WTC11 (cell line): ENCODE measurements at regions of chr4 and their contacts with region 1.

Region 1: GRCh38 chr4:98506462-98507132 is 151.8 kb downstream of the TSPAN5 start:
- DNase-seq: peak; percentile 30
- ATAC-seq: peak; percentile 96
- H3K4me3 Mint-ChIP-seq: no peak overlapping the region; the same call in 1 of the 2 replicates
- H3K27ac Mint-ChIP-seq: peak overlapping the region; percentile 50; the same call in 1 of the 2 replicates
- H3K4me1 Mint-ChIP-seq: peaks cover 38% of the 10 kb centered on the region
- H3K27me3 Mint-ChIP-seq: no peaks in the 10 kb centered on the region
- CTCF ChIP-seq: peak; percentile 42; the same call in 1 of the 2 replicates

Region 2: DNA sequence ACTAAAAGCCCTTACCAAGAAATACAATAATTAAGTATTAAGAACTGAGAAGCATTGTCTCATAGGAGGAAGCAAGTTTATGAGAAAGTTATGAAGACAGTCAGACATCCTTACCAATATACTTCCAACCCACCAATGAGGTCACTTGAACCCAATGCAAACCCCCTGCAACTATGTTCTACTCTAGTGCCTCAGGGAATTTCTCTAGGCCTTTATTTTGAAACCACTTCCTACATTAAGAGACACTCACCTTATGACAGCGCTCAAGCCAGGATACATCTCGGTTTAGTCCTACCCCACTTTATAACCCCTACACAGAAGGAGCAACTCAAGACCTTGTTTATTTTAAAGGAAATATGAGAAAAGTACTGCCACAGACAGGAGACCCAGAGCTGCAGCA is 424.6 kb before region 1 on chr4:
- CTCF ChIA-PET with region 1: no interaction called
- POLR2A ChIA-PET with region 1: no interaction called
- DNase-seq: no peak
- ATAC-seq: no peak
- H3K4me3 Mint-ChIP-seq: no peak overlapping the region
- H3K27ac Mint-ChIP-seq: no peak overlapping the region
- H3K4me1 Mint-ChIP-seq: no peaks in the 10 kb centered on the region
- H3K27me3 Mint-ChIP-seq: no peaks in the 10 kb centered on the region
- CTCF ChIP-seq: no peak

Region 3: DNA sequence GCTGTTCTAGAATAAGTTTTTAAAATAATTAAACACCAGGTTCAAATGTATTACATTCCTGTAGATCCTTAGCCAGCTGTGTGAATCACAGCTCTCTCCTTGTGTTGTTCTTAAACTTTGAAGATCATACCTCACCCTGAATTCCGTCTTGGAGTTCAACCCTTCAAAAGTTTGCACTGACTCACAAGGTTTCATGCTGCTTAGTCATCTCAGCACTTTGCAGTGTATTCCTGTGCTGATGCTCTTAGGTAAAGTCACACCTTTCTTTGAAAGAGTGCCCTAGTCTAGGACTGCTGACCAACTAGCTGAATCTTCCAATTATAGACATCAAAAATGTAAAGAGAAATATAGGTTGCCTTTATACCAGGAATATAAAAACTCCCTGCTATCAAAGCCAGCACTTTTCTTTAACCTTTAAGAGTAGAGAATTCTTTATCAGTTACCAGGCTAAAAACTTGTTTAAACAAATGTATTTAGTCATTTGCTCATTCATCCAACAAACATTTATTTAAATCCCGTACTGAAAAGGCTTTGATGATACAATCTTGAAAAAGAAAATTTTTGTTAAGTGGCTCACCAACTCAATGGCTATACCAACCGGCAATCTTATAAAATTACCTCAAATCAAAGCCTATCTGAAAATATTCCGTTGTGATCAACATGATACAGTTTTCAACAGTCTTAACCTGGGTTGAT is 75.7 kb before region 1 on chr4:
- CTCF ChIA-PET with region 1: no interaction called
- POLR2A ChIA-PET with region 1: no interaction called
- DNase-seq: no peak
- ATAC-seq: no peak
- H3K4me3 Mint-ChIP-seq: no peak overlapping the region
- H3K27ac Mint-ChIP-seq: no peak overlapping the region
- H3K4me1 Mint-ChIP-seq: 0 out of 2 replicates have a peak, but pooled peaks cover 3% of the 10 kb centered on the region
- H3K27me3 Mint-ChIP-seq: no peaks in the 10 kb centered on the region
- CTCF ChIP-seq: no peak

Region 4: DNA sequence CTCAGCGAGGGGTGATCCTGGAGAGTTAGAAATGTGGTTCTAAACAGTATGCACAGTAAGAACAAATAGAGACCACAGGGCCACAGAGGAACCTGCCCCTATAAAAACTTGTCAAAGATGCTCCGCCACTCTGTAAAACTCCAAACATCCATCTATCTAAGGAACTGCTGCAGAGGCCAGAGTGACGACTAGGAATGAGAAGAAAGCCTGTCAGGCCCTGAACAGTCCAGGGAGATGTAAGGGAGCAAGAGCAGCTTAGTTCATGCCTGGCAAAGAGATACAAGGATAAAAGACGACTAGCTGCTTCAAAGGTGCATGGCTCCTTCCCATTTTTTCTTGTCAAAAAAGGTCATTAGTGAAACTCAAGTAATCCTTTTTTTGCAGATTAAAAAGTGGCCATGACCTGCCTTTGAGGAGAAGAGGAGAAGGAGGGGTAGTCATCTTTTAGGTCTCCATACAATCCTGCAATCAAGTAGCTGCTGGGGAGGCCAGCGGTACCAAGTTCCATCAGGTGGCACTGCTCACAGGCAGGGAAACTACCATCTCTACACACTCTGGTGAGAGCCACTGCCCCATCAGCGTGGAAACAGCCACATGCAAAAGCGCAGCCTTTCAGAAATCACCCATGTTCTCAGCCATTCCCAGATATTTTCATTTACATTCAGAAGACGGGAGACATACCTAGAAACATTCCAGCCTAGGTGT is 10.3 kb before region 1 on chr4:
- CTCF ChIA-PET with region 1: interaction called, 18 read pairs
- POLR2A ChIA-PET with region 1: no interaction called
- DNase-seq: no peak
- ATAC-seq: no peak
- H3K4me3 Mint-ChIP-seq: no peak overlapping the region
- H3K27ac Mint-ChIP-seq: no peak overlapping the region; the same call in 1 of the 2 replicates
- H3K4me1 Mint-ChIP-seq: peaks cover 34% of the 10 kb centered on the region
- H3K27me3 Mint-ChIP-seq: no peaks in the 10 kb centered on the region
- CTCF ChIP-seq: no peak

Region 5: DNA sequence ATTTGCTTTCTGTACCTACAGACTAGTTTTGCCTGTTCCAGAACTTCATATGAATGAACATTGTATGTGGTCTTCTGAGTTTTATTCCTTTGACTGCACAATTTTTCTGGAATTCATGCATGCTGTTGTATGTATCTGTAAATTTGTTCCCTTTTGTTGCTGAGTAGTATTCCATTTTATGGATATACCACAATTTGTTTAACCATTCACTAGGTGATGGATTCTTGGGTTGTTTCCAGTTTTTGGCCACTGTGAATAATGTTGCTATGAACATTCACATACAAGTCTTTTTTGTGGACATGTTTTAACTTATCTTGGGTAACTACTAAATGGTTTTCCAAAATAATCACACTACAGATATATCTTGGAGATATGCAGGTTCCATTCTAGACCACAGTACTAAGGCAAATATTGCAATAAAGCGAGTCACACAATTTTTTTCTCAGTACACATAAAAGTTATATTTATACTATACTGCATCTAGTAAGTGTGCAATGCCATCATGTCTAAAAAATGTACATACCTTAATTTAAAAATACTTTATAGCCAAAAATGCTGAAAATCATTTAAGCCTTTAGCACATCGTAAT is 93.1 kb after region 1 on chr4:
- CTCF ChIA-PET with region 1: no interaction called
- POLR2A ChIA-PET with region 1: no interaction called
- DNase-seq: no peak
- ATAC-seq: no peak
- H3K4me3 Mint-ChIP-seq: no peak overlapping the region
- H3K27ac Mint-ChIP-seq: no peak overlapping the region
- H3K4me1 Mint-ChIP-seq: peaks cover 35% of the 10 kb centered on the region
- H3K27me3 Mint-ChIP-seq: peaks cover 5% of the 10 kb centered on the region
- CTCF ChIP-seq: no peak

Region 6: DNA sequence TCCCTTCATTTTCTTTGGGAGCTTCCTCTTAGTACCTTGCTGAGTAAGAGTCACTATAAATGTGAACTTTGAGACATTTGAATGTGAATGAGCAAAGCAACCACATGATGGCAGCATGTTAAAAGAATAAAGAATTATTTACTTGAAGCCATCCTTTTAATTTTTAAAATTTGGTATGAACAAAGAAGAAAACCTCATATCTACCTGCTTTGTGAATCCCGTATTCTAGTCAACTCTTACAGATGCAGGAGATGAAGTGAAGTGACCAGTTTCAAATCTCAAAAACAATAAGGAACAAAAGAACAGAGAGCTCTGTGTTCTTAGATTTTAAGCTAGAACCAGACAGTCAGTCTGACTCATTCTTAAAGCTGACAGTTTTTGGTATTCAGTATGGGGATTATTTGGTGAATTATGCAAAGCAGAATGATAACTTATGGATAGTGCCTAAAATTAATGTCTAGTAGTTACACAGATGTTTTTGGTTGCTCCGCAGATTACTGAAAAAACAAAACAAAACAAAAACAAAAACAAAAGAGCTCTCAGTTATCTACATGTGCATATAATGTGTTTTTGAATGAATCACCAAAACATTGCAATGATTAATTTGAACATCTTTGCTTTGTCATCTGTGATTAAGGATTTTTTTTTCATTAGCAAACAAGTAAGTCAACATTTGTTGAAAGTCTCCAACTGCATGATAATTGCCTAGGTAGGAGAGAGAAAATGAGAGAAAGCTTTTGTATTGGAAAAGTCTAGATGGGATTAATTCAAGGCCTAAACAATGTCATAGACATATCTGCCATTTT is 1491.7 kb after region 1 on chr4:
- CTCF ChIA-PET with region 1: no interaction called
- POLR2A ChIA-PET with region 1: no interaction called
- DNase-seq: no peak
- ATAC-seq: peak; percentile 47; the same call in 1 of the 2 replicates
- H3K4me3 Mint-ChIP-seq: no peak overlapping the region
- H3K27ac Mint-ChIP-seq: no peak overlapping the region
- H3K4me1 Mint-ChIP-seq: peaks cover 12% of the 10 kb centered on the region
- H3K27me3 Mint-ChIP-seq: no peaks in the 10 kb centered on the region
- CTCF ChIP-seq: no peak